B cell (primary cell): ENCODE measurements at regions of chr19 and their contacts with region 1.

Region 1: GRCh38 chr19:38929929-38930775 is at the start of gene SARS2:
- DNase-seq: no peak
- ATAC-seq: peak; percentile 69
- H3K4me3 ChIP-seq: peak within 1 kb of the TSS; percentile 79 to 93 (median 91)
- H3K4me3 Mint-ChIP-seq: peak within 1 kb of the TSS; percentile 99
- H3K27ac ChIP-seq: peak within 1 kb of the TSS; percentile 84 to 91
- H3K27ac Mint-ChIP-seq: peak within 1 kb of the TSS; percentile 99
- H3K4me1 ChIP-seq: peaks cover 19 to 28% of the 10 kb centered on the region in 2 donors
- H3K4me1 Mint-ChIP-seq: peaks cover 26% of the 10 kb centered on the region
- H3K27me3 ChIP-seq: no peaks in the 10 kb centered on the region
- H3K27me3 Mint-ChIP-seq: no peaks in the 10 kb centered on the region
- CTCF ChIP-seq: peak; percentile 100
- total RNA-seq, gene SARS2: 32.0 and 38.1 TPM in 2 replicates

Region 2: GRCh38 chr19:38263689-38264485 is 666.3 kb before region 1 on chr19:
- CTCF ChIA-PET with region 1: no interaction called
- POLR2A ChIA-PET with region 1: no interaction called
- intact Hi-C with region 1: loop called (anchors 1 kb)
- DNase-seq: peak; percentile 95
- ATAC-seq: peak; percentile 91
- H3K4me3 ChIP-seq: peak overlapping the region in 4 of 5 experiments; percentile 67 to 87 (median 71)
- H3K4me3 Mint-ChIP-seq: peak overlapping the region; percentile 98
- H3K27ac ChIP-seq: peak overlapping the region; percentile 83 to 98
- H3K27ac Mint-ChIP-seq: peak overlapping the region; percentile 99
- H3K4me1 ChIP-seq: peaks cover 20 to 26% of the 10 kb centered on the region in 2 donors
- H3K4me1 Mint-ChIP-seq: peaks cover 39% of the 10 kb centered on the region
- H3K27me3 ChIP-seq: no peaks in the 10 kb centered on the region
- H3K27me3 Mint-ChIP-seq: no peaks in the 10 kb centered on the region
- CTCF ChIP-seq: no peak

Region 3: GRCh38 chr19:38514812-38515633 is 415.1 kb before region 1 on chr19:
- CTCF ChIA-PET with region 1: interaction called, 5 read pairs
- POLR2A ChIA-PET with region 1: no interaction called
- intact Hi-C with region 1: loop called (anchors 2 kb)
- DNase-seq: peak; percentile 82
- ATAC-seq: peak; percentile 92
- H3K4me3 ChIP-seq: no peak overlapping the region
- H3K4me3 Mint-ChIP-seq: peak overlapping the region; percentile 37
- H3K27ac ChIP-seq: no peak overlapping the region
- H3K27ac Mint-ChIP-seq: no peak overlapping the region
- H3K4me1 ChIP-seq: peaks cover 4 to 7% of the 10 kb centered on the region in 2 donors
- H3K4me1 Mint-ChIP-seq: peaks cover 6% of the 10 kb centered on the region
- H3K27me3 ChIP-seq: peaks cover 0 to 8% (median 0%) of the 10 kb centered on the region in 4 experiments
- H3K27me3 Mint-ChIP-seq: peaks cover 4% of the 10 kb centered on the region
- CTCF ChIP-seq: peak; percentile 87

Region 4: GRCh38 chr19:38640368-38640767 is 289.8 kb before region 1 on chr19:
- CTCF ChIA-PET with region 1: interaction called, 26 read pairs
- POLR2A ChIA-PET with region 1: no interaction called
- intact Hi-C with region 1: loop called (anchors 1 kb)
- DNase-seq: no peak
- ATAC-seq: no peak
- H3K4me3 ChIP-seq: no peak overlapping the region
- H3K4me3 Mint-ChIP-seq: no peak overlapping the region
- H3K27ac ChIP-seq: no peak overlapping the region
- H3K27ac Mint-ChIP-seq: no peak overlapping the region
- H3K4me1 ChIP-seq: peaks cover 14 to 22% of the 10 kb centered on the region in 2 donors
- H3K4me1 Mint-ChIP-seq: peaks cover 19% of the 10 kb centered on the region
- H3K27me3 ChIP-seq: no peaks in the 10 kb centered on the region
- H3K27me3 Mint-ChIP-seq: no peaks in the 10 kb centered on the region
- CTCF ChIP-seq: no peak

Region 5: GRCh38 chr19:38736036-38736412 is 194.1 kb before region 1 on chr19:
- CTCF ChIA-PET with region 1: interaction called, 51 read pairs
- POLR2A ChIA-PET with region 1: interaction called, 4 read pairs
- intact Hi-C with region 1: loop called (anchors 1 kb)
- DNase-seq: peak; percentile 87
- ATAC-seq: peak; percentile 53
- H3K4me3 ChIP-seq: peak overlapping the region in 4 of 5 experiments; percentile 32 to 69 (median 58)
- H3K4me3 Mint-ChIP-seq: peak overlapping the region; percentile 79
- H3K27ac ChIP-seq: no peak overlapping the region
- H3K27ac Mint-ChIP-seq: peak overlapping the region; percentile 76
- H3K4me1 ChIP-seq: peaks cover 29 to 47% of the 10 kb centered on the region in 2 donors
- H3K4me1 Mint-ChIP-seq: peaks cover 42% of the 10 kb centered on the region
- H3K27me3 ChIP-seq: no peaks in the 10 kb centered on the region
- H3K27me3 Mint-ChIP-seq: no peaks in the 10 kb centered on the region
- CTCF ChIP-seq: no peak

Region 6: GRCh38 chr19:38869856-38870607 is 60.1 kb before region 1 on chr19:
- CTCF ChIA-PET with region 1: interaction called, 11 read pairs
- POLR2A ChIA-PET with region 1: interaction called, 3 read pairs
- intact Hi-C with region 1: loop called (anchors 1 kb)
- DNase-seq: peak; percentile 97
- ATAC-seq: peak; percentile 87
- H3K4me3 ChIP-seq: peak overlapping the region; percentile 70 to 97 (median 86)
- H3K4me3 Mint-ChIP-seq: peak overlapping the region; percentile 95
- H3K27ac ChIP-seq: peak overlapping the region; percentile 72 to 76
- H3K27ac Mint-ChIP-seq: peak overlapping the region; percentile 92
- H3K4me1 ChIP-seq: peaks cover 39 to 53% of the 10 kb centered on the region in 2 donors
- H3K4me1 Mint-ChIP-seq: peaks cover 54% of the 10 kb centered on the region
- H3K27me3 ChIP-seq: no peaks in the 10 kb centered on the region
- H3K27me3 Mint-ChIP-seq: no peaks in the 10 kb centered on the region
- CTCF ChIP-seq: peak; percentile 86

Region 7: GRCh38 chr19:38912600-38913514 is 17.3 kb before region 1 on chr19:
- CTCF ChIA-PET with region 1: no interaction called
- POLR2A ChIA-PET with region 1: no interaction called
- intact Hi-C with region 1: no loop called
- DNase-seq: no peak
- ATAC-seq: no peak
- H3K4me3 ChIP-seq: no peak overlapping the region
- H3K4me3 Mint-ChIP-seq: no peak overlapping the region
- H3K27ac ChIP-seq: no peak overlapping the region
- H3K27ac Mint-ChIP-seq: no peak overlapping the region
- H3K4me1 ChIP-seq: no peaks in the 10 kb centered on the region
- H3K4me1 Mint-ChIP-seq: no peaks in the 10 kb centered on the region
- H3K27me3 ChIP-seq: peaks cover 0 to 2% (median 0%) of the 10 kb centered on the region in 4 experiments
- H3K27me3 Mint-ChIP-seq: no peaks in the 10 kb centered on the region
- CTCF ChIP-seq: no peak

Region 8: GRCh38 chr19:39916851-39917396 is 986.8 kb after region 1 on chr19:
- CTCF ChIA-PET with region 1: no interaction called
- POLR2A ChIA-PET with region 1: no interaction called
- intact Hi-C with region 1: no loop called
- DNase-seq: no peak
- ATAC-seq: no peak
- H3K4me3 ChIP-seq: no peak overlapping the region
- H3K4me3 Mint-ChIP-seq: no peak overlapping the region
- H3K27ac ChIP-seq: no peak overlapping the region
- H3K27ac Mint-ChIP-seq: no peak overlapping the region
- H3K4me1 ChIP-seq: peaks cover 0 to 10% of the 10 kb centered on the region in 2 donors
- H3K4me1 Mint-ChIP-seq: peaks cover 8% of the 10 kb centered on the region
- H3K27me3 ChIP-seq: no peaks in the 10 kb centered on the region
- H3K27me3 Mint-ChIP-seq: peaks cover 3% of the 10 kb centered on the region
- CTCF ChIP-seq: no peak